ENCODE measurements at regions of chr4 and their contacts with region 1.

Region 1: DNA sequence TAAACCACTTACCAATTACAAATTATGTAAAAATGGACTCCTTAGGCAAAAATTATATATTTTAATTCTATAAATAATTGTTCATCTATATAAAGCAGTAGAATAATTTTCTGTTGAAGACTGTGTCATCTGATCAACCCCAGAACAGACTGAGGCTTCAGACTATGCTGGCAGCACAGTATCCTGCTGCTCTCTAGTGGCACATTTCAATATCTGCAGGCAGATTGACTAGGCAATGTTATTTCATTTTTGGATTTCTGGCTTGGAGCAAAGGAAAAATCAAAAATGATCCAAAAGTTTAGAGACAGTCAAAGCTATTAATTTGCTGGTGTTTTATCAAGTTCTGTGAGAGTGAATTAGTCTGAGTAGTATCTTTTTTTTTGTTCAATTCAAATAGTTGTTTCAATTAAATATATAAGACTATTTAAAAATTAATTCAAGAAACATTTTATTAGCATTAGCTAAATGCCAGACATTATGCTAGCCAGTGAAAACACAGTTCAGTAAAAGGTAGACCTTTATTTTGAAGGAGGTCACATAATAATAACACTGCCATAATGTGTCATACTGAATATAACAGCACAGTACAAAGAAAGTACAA is 21.3 kb upstream of the SULT1E1 start:
- DNase-seq: no peak
- H3K4me3 ChIP-seq: no peak overlapping the region
- H3K27ac ChIP-seq: no peak overlapping the region
- H3K4me1 ChIP-seq: no peaks in the 10 kb centered on the region
- H3K27me3 ChIP-seq: no peaks in the 10 kb centered on the region
- CTCF ChIP-seq: peak; percentile 74

Region 2: DNA sequence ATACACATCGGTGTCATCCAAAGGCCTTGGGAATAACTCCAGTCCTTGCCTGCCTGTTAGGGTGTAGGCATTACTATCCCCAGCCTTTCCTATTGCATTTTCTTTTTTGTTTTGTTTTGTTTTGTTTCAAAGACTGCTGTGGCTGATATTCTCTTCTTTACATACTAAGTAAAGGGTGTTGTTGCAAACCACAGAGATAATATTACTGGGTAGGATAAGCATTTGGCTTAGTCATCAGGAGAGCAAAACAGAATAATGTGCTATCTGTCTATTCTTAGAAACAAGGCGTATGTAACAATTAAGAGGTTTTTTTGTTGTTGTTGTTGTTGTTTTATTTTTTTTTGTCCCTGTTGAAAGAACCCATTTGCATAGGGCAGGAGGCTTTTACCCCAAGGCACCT is 559.2 kb before region 1 on chr4:
- CTCF ChIA-PET with region 1: no interaction called
- POLR2A ChIA-PET with region 1: no interaction called
- intact Hi-C with region 1: loop called (anchors 2 kb)
- DNase-seq: no peak
- H3K4me3 ChIP-seq: no peak overlapping the region
- H3K27ac ChIP-seq: no peak overlapping the region
- H3K4me1 ChIP-seq: no peaks in the 10 kb centered on the region
- H3K27me3 ChIP-seq: no peaks in the 10 kb centered on the region
- CTCF ChIP-seq: no peak

Region 3: GRCh38 chr4:69689599-69689998 is 191.7 kb before region 1 on chr4:
- CTCF ChIA-PET with region 1: no interaction called
- POLR2A ChIA-PET with region 1: no interaction called
- intact Hi-C with region 1: loop called (anchors 1 kb)
- DNase-seq: no peak
- H3K4me3 ChIP-seq: no peak overlapping the region
- H3K27ac ChIP-seq: no peak overlapping the region
- H3K4me1 ChIP-seq: no peaks in the 10 kb centered on the region
- H3K27me3 ChIP-seq: no peaks in the 10 kb centered on the region
- CTCF ChIP-seq: peak; percentile 73

Region 4: DNA sequence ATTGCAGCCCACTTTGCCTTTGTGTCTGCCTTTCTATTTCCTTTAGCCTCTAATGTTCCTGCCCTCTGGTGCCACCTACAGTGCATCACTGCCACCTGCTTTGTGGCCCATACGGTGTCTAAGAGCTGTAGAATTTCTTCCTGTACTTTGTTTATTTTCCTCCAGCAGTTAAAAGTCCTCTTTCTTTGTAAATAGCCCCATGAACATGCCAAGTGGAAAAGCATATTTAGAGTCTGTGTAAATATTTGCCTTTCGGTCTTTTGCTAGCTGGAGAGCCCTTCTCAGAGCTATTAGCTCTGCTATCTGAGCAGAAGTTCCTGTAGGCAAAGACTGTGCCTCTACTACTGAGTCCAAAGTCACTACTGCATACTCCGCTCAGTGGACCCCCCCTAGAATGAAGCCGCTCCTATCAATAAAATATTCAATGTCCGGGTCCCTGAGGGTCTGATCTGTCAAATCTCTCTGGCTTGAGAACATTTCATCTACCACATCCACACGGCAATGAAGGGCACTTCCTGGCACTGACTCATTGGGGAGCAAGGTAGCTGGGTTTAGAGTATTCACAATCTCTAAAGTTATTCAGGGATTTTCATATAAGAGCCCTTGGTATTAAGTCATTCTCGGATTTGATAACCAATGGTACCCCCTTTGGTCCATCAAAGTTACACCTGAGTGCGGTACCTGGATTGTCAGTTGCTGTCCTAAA is 57.6 kb before region 1 on chr4:
- CTCF ChIA-PET with region 1: interaction called, 4 read pairs
- POLR2A ChIA-PET with region 1: no interaction called
- intact Hi-C with region 1: loop called (anchors 2 kb)
- DNase-seq: peak in 1 of 2 experiments; percentile 13
- H3K4me3 ChIP-seq: no peak overlapping the region
- H3K27ac ChIP-seq: no peak overlapping the region
- H3K4me1 ChIP-seq: no peaks in the 10 kb centered on the region
- H3K27me3 ChIP-seq: no peaks in the 10 kb centered on the region
- CTCF ChIP-seq: 0 out of 2 replicates have a peak, but pooled peaks have one; percentile 34

Region 5: DNA sequence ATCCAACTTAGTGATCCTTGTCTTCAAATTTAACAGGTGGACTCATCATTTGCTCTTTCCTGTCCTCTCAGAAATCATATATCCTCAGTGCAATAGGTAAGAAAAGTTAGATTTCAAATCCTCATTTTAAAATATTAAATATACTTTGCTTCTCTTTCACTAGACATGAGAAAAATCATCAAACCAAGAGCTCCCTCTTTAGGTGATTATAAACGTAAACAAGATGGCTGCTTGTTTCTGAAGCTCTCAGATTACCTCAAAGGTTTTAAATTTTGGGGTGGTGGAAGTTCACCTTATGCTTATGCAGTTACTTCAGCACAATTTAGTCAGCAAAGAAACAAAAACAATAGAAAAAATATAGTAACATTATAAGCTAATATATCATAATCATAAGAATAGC is 388.4 kb after region 1 on chr4:
- CTCF ChIA-PET with region 1: no interaction called
- POLR2A ChIA-PET with region 1: no interaction called
- intact Hi-C with region 1: loop called (anchors 1 kb)
- DNase-seq: no peak
- H3K4me3 ChIP-seq: no peak overlapping the region
- H3K27ac ChIP-seq: no peak overlapping the region
- H3K4me1 ChIP-seq: no peaks in the 10 kb centered on the region
- H3K27me3 ChIP-seq: no peaks in the 10 kb centered on the region
- CTCF ChIP-seq: peak; percentile 35; the same call in 1 of the 2 replicates

Region 6: DNA sequence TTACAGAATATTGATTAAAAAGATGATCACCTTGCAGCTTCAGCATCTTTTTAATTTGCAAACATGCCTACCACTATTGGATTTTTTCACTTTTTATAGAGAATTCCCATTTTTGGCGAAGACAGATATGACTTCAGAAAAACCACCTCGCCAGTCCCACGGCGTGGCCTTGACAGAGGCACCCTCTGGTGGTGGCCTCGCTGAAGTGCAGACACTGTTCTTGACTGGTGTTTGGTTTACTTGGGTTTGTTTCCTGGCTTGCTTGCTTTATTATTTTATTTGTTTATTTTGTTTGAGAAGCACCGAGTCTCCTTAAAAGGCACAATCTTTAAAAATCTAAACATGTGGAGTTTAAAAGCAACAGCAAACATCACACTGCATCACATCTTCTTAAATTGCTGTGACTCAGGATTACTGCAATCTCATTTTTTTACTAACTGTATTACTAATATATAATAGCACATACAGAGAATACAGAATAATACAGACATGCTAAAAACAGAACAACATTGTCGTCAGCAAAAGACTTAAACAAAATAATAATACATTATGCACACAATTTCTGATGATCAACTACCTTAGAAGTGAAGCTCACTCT is 624.0 kb after region 1 on chr4:
- CTCF ChIA-PET with region 1: no interaction called
- POLR2A ChIA-PET with region 1: no interaction called
- intact Hi-C with region 1: loop called (anchors 5 kb)
- DNase-seq: peak in 1 of 2 experiments; percentile 25
- H3K4me3 ChIP-seq: no peak overlapping the region
- H3K27ac ChIP-seq: no peak overlapping the region
- H3K4me1 ChIP-seq: no peaks in the 10 kb centered on the region
- H3K27me3 ChIP-seq: no peaks in the 10 kb centered on the region
- CTCF ChIP-seq: peak; percentile 81

Region 7: DNA sequence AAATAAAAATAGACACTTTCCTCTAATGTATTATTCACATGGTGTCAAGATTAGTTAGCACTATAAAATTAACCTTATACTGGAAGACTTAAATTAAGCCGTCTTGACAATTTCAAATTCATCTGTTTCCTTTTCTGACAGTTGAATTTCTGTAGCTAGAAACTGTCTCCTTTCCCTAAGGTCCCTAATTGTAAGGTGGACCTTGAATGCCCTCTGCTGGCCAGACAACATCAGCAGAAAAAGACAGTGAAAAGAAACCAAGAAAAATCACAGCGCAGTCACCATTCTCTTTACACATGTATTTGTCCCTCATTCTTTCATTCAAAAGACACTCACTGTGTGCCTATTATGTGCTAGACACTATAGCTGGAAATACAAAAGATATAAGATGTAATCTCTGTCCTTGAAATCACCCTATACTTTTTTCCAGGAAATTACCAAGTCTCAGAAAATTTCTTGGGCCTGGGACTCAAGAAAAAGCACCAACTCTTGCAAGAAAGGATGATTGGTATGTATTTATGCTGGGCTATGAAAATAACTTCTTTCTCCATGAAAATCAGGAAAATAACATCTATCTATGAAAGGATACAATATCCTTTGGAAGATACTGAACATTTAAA is 678.0 kb after region 1 on chr4:
- CTCF ChIA-PET with region 1: no interaction called
- POLR2A ChIA-PET with region 1: no interaction called
- intact Hi-C with region 1: loop called (anchors 5 kb)
- DNase-seq: peak in 1 of 2 experiments; percentile 25
- H3K4me3 ChIP-seq: no peak overlapping the region
- H3K27ac ChIP-seq: no peak overlapping the region
- H3K4me1 ChIP-seq: no peaks in the 10 kb centered on the region
- H3K27me3 ChIP-seq: no peaks in the 10 kb centered on the region
- CTCF ChIP-seq: peak; percentile 74